ENCODE measurements at regions of chr4 and their contacts with region 1.

Region 1: DNA sequence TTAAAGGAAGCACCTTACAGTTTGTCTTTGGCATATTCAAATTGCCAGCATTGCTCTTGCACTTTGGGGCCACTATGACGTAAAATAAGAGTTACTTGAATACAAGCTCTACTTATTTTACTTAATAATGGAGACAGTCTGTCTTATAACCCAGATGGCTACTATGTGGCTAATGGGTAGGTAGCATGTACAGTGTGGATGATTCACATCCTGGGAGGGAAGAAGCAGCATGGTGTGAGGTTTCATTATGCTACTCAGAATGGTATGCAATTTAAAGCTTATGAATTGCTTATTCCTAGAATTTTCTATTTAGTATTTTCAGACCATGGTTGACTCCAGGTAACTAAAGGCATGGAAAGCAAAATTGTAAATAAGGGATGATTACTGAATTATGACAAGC is 761.8 kb upstream of the ATOH1 start:
- DNase-seq: no peak
- H3K4me3 ChIP-seq: no peak overlapping the region
- H3K27ac ChIP-seq: no peak overlapping the region
- H3K4me1 ChIP-seq: no peaks in the 10 kb centered on the region
- CTCF ChIP-seq: no peak

Region 2: DNA sequence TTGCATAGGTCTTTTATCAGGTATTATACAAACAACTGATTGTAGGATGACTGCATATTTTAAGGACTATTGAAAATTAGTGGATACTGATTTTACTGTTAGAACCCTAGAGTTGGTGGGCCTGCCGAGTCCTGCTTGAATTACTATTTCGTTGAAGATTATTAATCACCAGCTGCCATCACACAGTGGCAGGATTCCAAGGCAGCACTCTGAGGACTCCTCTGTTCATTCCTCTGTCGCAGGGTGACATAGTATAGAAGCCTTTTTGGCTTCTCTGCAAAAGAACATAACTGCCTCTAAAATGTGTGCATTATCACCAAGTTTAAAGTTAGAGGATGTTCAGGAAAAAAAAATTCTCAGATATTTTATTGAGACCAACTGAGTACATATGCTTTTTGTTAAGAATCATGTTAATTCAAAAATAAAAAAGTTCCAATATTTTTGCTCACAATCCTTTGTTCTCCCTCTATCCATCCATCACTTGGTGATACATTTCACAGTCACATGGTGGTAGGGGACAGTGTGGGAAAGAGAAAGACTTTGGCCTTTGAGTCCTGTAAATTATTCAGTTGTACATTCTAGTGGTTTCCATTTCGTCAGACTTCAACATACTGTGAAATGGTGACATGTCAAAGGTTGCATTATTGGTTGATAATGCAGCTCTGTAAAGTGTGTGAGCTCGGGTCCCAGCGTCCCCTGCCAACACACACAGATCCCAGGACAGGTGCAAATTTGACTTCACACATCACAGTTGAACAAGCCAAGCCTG is 430.5 kb before region 1 on chr4:
- CTCF ChIA-PET with region 1: no interaction called
- POLR2A ChIA-PET with region 1: no interaction called
- intact Hi-C with region 1: no loop called
- DNase-seq: no peak
- H3K4me3 ChIP-seq: no peak overlapping the region
- H3K27ac ChIP-seq: no peak overlapping the region
- H3K4me1 ChIP-seq: no peaks in the 10 kb centered on the region
- CTCF ChIP-seq: no peak

Region 3: GRCh38 chr4:92864096-92864495 is 202.7 kb before region 1 on chr4:
- CTCF ChIA-PET with region 1: no interaction called
- POLR2A ChIA-PET with region 1: no interaction called
- intact Hi-C with region 1: no loop called
- DNase-seq: no peak
- H3K4me3 ChIP-seq: no peak overlapping the region
- H3K27ac ChIP-seq: no peak overlapping the region
- H3K4me1 ChIP-seq: no peaks in the 10 kb centered on the region
- CTCF ChIP-seq: no peak

Region 4: DNA sequence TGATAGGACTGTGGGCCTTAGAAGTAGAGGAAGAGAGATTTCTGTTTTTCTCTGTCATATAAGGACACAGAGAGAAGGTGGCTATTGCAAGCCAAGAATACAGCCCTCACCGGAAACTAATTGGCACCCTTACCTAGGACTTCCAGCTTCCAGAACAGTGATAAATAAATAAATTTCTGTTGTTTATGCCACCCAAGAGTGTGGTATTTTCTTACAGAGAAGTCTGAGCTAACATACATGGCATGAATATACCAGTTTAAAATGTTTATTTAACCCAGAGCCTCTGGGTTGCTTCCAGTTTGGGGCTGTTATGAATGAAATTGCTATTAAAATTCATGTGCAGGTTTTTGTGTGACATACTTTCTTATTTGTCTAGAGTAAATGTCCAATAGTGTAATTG is 107.8 kb after region 1 on chr4:
- CTCF ChIA-PET with region 1: no interaction called
- POLR2A ChIA-PET with region 1: no interaction called
- intact Hi-C with region 1: no loop called
- DNase-seq: no peak
- H3K4me3 ChIP-seq: no peak overlapping the region
- H3K27ac ChIP-seq: no peak overlapping the region
- H3K4me1 ChIP-seq: no peaks in the 10 kb centered on the region
- CTCF ChIP-seq: no peak

Region 5: GRCh38 chr4:93748943-93749761 is 682.4 kb after region 1 on chr4:
- CTCF ChIA-PET with region 1: no interaction called
- POLR2A ChIA-PET with region 1: no interaction called
- intact Hi-C with region 1: no loop called
- DNase-seq: no peak
- H3K4me3 ChIP-seq: no peak overlapping the region
- H3K27ac ChIP-seq: no peak overlapping the region
- H3K4me1 ChIP-seq: no peaks in the 10 kb centered on the region
- CTCF ChIP-seq: no peak

Region 6: DNA sequence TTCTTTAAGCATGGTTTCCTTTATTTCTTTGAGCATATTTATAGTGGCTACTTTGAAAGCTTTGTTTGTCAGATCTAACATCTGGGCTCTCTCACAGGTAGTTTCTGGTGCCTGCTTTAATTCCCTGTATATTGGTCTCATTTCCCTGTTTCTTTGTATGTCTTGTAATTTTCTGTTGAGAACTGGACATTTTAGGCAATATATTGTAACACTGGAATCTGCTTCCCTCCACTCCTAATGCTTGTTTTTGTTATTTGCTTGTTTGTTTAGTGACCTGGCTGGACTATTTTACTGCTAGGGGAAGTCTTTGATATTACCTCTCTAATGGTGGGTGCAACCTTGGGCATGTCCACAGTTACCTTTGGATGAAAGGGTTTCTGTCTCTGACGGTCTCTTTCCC is 1716.0 kb after region 1 on chr4:
- CTCF ChIA-PET with region 1: no interaction called
- POLR2A ChIA-PET with region 1: no interaction called
- intact Hi-C with region 1: loop called (anchors 5 kb)
- DNase-seq: no peak
- H3K4me3 ChIP-seq: no peak overlapping the region
- H3K27ac ChIP-seq: no peak overlapping the region
- H3K4me1 ChIP-seq: no peaks in the 10 kb centered on the region
- CTCF ChIP-seq: no peak

Measured in OCI-LY7 (cell line).